ENCODE measurements at regions of chr20 and their contacts with region 1.

Region 1: DNA sequence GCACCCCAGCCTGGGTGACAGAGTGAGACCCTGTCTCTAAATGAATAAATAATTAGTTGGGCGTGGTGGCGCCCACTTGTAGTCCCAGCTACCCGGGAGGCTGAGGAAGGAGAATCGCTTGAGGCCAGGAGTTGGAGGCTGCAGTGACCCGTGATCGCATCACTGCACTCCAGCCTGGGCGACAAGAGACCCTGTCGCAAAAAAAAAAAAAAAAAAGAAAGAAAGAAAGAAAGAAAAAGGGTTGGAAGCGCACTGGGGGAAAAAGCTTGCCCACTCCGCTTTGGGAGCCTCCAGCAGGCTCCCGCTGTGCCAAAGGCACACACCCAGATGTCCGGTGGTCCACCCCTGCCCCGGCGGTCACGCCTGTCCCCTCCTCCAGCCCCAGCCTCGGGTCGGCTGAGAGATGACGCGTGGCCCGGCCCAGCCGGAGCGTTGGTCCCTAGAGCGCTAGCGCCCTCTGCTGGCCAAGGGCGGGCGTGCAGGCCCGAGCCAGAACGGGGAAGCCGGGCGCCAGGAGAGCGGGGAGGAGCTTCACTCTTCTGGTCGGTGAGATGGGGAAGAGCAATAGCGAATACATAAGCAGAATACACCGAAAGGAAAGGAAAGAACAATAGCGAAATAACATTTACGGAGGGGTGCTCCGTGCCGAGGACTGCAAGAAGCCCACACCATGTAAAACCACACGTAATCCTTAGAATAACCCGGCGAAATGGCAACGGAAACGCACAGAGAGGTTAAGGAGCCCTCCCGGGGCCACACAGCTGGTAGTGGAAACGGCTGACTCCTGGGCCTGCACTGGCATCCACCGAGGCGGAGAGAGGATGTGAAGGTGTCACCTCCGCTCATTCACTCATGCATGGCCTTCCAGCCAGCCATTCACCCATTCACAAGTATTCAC is 41.7 kb downstream of the UBE2V1 start:
- DNase-seq: peak; percentile 88
- H3K4me3 Mint-ChIP-seq: peak overlapping the region; percentile 56
- H3K27ac Mint-ChIP-seq: no peak overlapping the region
- H3K4me1 Mint-ChIP-seq: peaks cover 6% of the 10 kb centered on the region
- H3K27me3 Mint-ChIP-seq: peaks cover 12% of the 10 kb centered on the region

Region 2: GRCh38 chr20:49888345-49888966 is 182.8 kb before region 1 on chr20:
- intact Hi-C with region 1: loop called (anchors 1 kb)
- DNase-seq: peak; percentile 17
- H3K4me3 Mint-ChIP-seq: no peak overlapping the region
- H3K27ac Mint-ChIP-seq: peak overlapping the region; percentile 40
- H3K4me1 Mint-ChIP-seq: peaks cover 21% of the 10 kb centered on the region
- H3K27me3 Mint-ChIP-seq: no peaks in the 10 kb centered on the region

Region 3: DNA sequence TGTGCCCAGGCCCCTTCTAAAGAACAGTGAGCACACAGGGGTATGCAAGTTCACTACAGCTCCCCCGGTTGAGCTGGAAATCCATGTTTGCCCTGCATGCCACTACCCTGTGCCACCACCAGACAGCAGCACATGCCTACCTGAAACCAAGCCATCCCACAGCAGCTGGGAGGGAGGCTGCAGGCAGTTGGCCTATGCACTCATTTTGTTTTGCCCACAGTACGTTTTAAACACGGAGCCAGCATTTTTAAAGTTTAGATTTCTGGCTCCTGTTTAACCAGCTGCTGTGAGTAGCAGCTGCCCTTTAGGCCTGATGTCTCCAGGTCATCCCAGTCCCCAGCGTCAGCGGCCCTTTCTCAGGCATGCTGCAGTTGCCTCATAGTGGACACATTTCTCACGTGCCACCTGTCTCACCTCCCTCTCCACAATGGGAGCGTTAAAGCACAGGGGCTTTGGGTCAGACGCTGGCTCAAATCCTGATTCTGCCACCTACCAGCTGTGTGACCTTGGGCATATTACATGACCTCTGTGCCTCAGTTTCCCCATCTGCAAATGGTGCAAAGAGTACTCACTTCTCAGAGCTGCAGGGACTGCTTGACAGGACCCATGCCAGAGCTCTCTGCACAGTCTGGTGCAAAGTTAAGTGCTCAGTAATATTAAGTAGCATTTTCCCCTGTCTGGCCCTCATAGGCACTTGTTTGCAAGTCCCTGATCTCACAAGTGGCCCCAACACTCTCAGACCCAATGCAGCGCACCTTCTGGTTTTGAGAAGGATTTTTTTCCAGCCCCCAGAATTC is 49.9 kb after region 1 on chr20:
- intact Hi-C with region 1: no loop called
- DNase-seq: peak; percentile 36
- H3K4me3 Mint-ChIP-seq: no peak overlapping the region
- H3K27ac Mint-ChIP-seq: no peak overlapping the region
- H3K4me1 Mint-ChIP-seq: peaks cover 3% of the 10 kb centered on the region
- H3K27me3 Mint-ChIP-seq: no peaks in the 10 kb centered on the region

Measured in activated T-helper 1 cell treated with anti-CD3 and anti-CD28 coated beads, Interleukin-12 subunit alpha, Interleukin-12 subunit beta, Interleukin-2, Interleukin-4 antibody, amounts not matched to agents 30 ng/mL and 10 ng/mL and 1 ng/mL, durations not matched to agents 14 hours and 24 hours and 36 hours (primary cell).